Activated CD4-positive, alpha-beta T cell treated with anti-CD3 and anti-CD28 coated beads for 36 hours (primary cell): ENCODE measurements at regions of chr12 and their contacts with region 1.

Region 1: DNA sequence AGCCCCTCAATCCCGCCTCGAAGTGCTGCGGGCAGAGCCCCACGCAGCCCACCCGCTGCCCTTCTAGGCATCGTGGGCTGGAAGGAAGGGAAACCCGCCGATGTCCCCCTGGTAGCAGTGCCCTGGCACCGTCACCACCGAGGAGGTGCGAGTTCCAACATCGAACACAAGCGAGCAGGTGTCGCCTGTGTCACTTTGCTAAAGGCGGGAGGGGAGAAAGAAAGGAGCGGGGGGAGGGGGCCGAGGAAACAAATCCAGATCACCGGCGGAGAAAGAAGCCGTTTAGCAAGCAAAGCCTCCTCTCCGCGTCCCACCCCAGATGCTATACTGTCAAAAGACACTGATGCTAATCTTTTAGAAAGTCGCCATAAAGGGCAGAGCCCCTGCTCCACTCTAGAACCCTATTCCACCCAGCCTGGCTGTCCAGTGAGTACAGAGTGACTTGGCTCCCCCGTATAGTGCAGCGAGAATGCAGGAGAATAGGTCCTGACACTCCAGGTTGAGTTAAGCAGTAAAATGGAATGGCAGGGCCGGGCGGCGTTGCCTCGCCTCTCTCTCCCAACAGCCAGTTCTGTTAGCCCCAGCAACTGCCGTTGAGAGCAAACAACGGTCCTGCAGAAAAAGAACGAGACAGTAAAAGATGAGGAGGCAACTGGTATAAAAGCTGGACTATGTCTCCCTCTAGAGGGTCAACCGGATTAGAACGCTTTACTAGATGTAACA is 67.9 kb upstream of the USP15 start:
- DNase-seq: peak; percentile 62
- ATAC-seq: peak; percentile 86
- H3K4me3 Mint-ChIP-seq: peak overlapping the region; percentile 71
- H3K27ac Mint-ChIP-seq: no peak overlapping the region
- H3K4me1 Mint-ChIP-seq: peaks cover 22% of the 10 kb centered on the region
- H3K27me3 Mint-ChIP-seq: peaks cover 36% of the 10 kb centered on the region

Region 2: GRCh38 chr12:61654698-61655097 is 537.6 kb before region 1 on chr12:
- CTCF ChIA-PET with region 1: no interaction called
- POLR2A ChIA-PET with region 1: no interaction called
- intact Hi-C with region 1: loop called in 1 of 2 experiments (anchors 10 kb)
- DNase-seq: no peak
- ATAC-seq: no peak
- H3K4me3 Mint-ChIP-seq: no peak overlapping the region
- H3K27ac Mint-ChIP-seq: no peak overlapping the region
- H3K4me1 Mint-ChIP-seq: no peaks in the 10 kb centered on the region
- H3K27me3 Mint-ChIP-seq: no peaks in the 10 kb centered on the region

Region 3: GRCh38 chr12:61916831-61917230 is 275.5 kb before region 1 on chr12:
- CTCF ChIA-PET with region 1: no interaction called
- POLR2A ChIA-PET with region 1: no interaction called
- intact Hi-C with region 1: no loop called
- DNase-seq: no peak
- ATAC-seq: no peak
- H3K4me3 Mint-ChIP-seq: no peak overlapping the region
- H3K27ac Mint-ChIP-seq: no peak overlapping the region
- H3K4me1 Mint-ChIP-seq: no peaks in the 10 kb centered on the region
- H3K27me3 Mint-ChIP-seq: no peaks in the 10 kb centered on the region

Region 4: GRCh38 chr12:62006076-62006732 is 186.1 kb before region 1 on chr12:
- CTCF ChIA-PET with region 1: no interaction called
- POLR2A ChIA-PET with region 1: no interaction called
- intact Hi-C with region 1: loop called (anchors 2 to 10 kb)
- DNase-seq: peak; percentile 32
- ATAC-seq: no peak
- H3K4me3 Mint-ChIP-seq: no peak overlapping the region
- H3K27ac Mint-ChIP-seq: no peak overlapping the region
- H3K4me1 Mint-ChIP-seq: no peaks in the 10 kb centered on the region
- H3K27me3 Mint-ChIP-seq: peaks cover 3% of the 10 kb centered on the region

Region 5: GRCh38 chr12:62123721-62124203 is 68.6 kb before region 1 on chr12:
- CTCF ChIA-PET with region 1: interaction called, 3 read pairs
- POLR2A ChIA-PET with region 1: no interaction called
- intact Hi-C with region 1: loop called (anchors 2 to 5 kb)
- DNase-seq: peak; percentile 65
- ATAC-seq: peak; percentile 83
- H3K4me3 Mint-ChIP-seq: no peak overlapping the region
- H3K27ac Mint-ChIP-seq: no peak overlapping the region
- H3K4me1 Mint-ChIP-seq: no peaks in the 10 kb centered on the region
- H3K27me3 Mint-ChIP-seq: peaks cover 10% of the 10 kb centered on the region

Region 6: GRCh38 chr12:62181481-62181880 is 10.9 kb before region 1 on chr12:
- CTCF ChIA-PET with region 1: interaction called, 10 read pairs
- POLR2A ChIA-PET with region 1: no interaction called
- intact Hi-C with region 1: no loop called
- DNase-seq: no peak
- ATAC-seq: no peak
- H3K4me3 Mint-ChIP-seq: no peak overlapping the region
- H3K27ac Mint-ChIP-seq: no peak overlapping the region
- H3K4me1 Mint-ChIP-seq: no peaks in the 10 kb centered on the region
- H3K27me3 Mint-ChIP-seq: peaks cover 5% of the 10 kb centered on the region

Region 7: DNA sequence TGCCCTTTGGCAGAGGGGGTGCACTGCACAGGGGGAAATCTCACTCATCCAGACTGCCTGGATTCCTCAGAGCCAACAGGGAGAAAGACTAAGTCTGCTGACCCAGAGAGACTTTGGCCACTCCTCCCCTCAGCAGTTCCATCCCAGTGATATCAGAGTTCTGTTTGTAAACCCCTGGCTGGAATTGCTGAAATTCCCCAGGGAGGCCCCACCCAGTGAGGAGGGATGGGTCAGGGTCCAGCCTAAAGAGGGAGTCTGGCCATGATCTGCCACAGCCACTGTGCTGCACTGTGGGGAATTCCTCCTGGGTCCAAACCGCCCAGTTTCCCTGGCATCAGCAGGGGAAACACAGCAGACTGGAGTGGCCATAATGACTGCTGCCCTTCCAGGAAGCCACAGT is 13.0 kb after region 1 on chr12:
- CTCF ChIA-PET with region 1: interaction called, 16 read pairs
- POLR2A ChIA-PET with region 1: interaction called, 14 read pairs
- intact Hi-C with region 1: no loop called
- DNase-seq: no peak
- ATAC-seq: no peak
- H3K4me3 Mint-ChIP-seq: no peak overlapping the region
- H3K27ac Mint-ChIP-seq: no peak overlapping the region
- H3K4me1 Mint-ChIP-seq: peaks cover 6% of the 10 kb centered on the region
- H3K27me3 Mint-ChIP-seq: no peaks in the 10 kb centered on the region

Region 8: DNA sequence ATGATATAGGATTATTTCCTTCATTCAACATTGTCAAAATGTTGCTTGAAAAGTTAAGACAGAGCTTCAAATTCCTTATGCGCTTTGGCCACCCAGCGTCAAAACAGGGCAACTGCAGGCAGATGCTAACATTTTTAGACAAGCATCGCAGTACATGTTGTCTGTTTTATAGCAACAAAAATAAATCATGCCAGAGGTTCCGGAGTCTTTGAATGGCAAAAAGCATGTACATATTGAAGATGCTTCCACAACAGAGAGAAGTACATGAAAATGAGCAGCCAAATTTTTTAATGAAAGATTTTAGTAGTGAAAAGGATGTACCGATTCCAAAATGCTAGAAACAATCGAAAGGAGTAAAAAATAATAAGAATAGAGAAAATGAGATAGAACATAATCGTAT is 18.1 kb after region 1 on chr12:
- CTCF ChIA-PET with region 1: interaction called, 16 read pairs
- POLR2A ChIA-PET with region 1: interaction called, 14 read pairs
- intact Hi-C with region 1: no loop called
- DNase-seq: peak; percentile 66
- ATAC-seq: peak; percentile 58
- H3K4me3 Mint-ChIP-seq: no peak overlapping the region
- H3K27ac Mint-ChIP-seq: no peak overlapping the region
- H3K4me1 Mint-ChIP-seq: peaks cover 19% of the 10 kb centered on the region
- H3K27me3 Mint-ChIP-seq: no peaks in the 10 kb centered on the region